ENCODE measurements at regions of chr4 and their contacts with region 1.

Region 1: DNA sequence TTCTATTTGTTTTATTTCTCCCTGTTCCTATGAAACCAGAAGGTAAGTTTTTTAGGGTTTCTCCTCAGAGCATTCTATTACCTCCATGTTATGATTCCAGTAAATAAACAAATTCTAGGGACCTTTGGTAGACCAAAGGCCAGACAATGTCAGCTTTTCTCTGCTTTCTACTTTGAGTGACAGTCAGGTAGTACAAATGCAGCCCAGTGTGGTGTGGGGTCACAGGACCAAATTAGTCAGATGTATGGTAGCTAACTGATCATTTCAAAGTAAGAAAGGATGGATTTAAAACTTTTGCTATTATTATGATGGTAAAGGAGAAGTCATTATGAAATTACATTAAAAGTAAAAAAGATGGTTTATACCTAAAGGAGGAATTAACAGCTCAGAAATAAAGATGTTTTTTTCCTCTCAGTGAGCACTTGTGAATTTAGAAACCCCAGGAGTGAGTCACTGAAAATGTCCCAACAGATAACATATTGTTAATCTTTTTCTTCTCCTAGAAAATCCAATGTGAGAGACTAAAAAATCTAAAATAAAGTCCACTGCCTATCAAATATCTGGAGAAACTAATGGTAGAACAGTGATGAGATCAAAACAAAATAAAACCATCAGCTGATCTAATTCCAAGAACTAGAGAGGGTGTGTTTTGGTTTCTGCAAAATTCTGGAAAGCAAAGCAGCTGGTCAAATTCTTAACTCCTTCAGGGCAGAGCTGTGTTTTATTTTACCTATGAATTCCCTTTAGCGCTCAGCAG is 16.6 kb upstream of the KLHL2 start:
- DNase-seq: no peak
- ATAC-seq: no peak
- H3K4me3 ChIP-seq: no peak overlapping the region
- H3K4me3 Mint-ChIP-seq: no peak overlapping the region
- H3K27ac ChIP-seq: no peak overlapping the region
- H3K27ac Mint-ChIP-seq: peak overlapping the region in 1 of 9 donors; percentile 22
- H3K4me1 ChIP-seq: no peaks in the 10 kb centered on the region
- H3K4me1 Mint-ChIP-seq: peaks cover 7 to 28% (median 22%) of the 10 kb centered on the region in 7 donors
- H3K27me3 ChIP-seq: no peaks in the 10 kb centered on the region
- H3K27me3 Mint-ChIP-seq: no peaks in the 10 kb centered on the region

Region 2: DNA sequence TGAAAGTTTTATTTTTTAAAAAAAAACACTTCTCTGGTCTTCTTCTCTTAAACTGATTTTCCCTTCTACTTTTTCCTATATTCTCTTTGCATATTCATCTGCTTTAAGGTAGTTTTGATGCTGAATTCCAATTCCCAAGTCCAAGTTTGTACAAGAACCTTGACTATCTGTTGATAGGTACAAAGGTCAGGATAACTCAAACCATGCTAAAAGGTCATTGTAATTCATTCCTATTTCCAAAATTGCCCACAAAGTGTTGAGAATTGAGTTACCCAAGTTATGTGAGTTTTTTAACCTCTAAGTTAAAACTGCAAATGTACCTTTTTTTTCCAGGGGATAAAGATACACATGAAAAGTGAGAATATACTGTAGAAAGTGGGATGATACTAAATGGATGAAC is 32.0 kb before region 1 on chr4:
- CTCF ChIA-PET with region 1: no interaction called
- POLR2A ChIA-PET with region 1: no interaction called
- intact Hi-C with region 1: loop called in 1 of 2 experiments (anchors 1 kb)
- DNase-seq: no peak
- ATAC-seq: no peak
- H3K4me3 ChIP-seq: no peak overlapping the region
- H3K4me3 Mint-ChIP-seq: no peak overlapping the region
- H3K27ac ChIP-seq: no peak overlapping the region
- H3K27ac Mint-ChIP-seq: no peak overlapping the region
- H3K4me1 ChIP-seq: no peaks in the 10 kb centered on the region
- H3K4me1 Mint-ChIP-seq: peaks cover 0 to 2% (median 0%) of the 10 kb centered on the region in 7 donors
- H3K27me3 ChIP-seq: peaks cover 0 to 6% of the 10 kb centered on the region in 2 donors
- H3K27me3 Mint-ChIP-seq: peaks cover 0 to 23% (median 9%) of the 10 kb centered on the region in 5 donors

Region 3: GRCh38 chr4:165207431-165208220 is 16.9 kb after region 1 on chr4 and contains the start of gene KLHL2:
- CTCF ChIA-PET with region 1: no interaction called
- POLR2A ChIA-PET with region 1: interaction called, 5 read pairs
- intact Hi-C with region 1: loop called in 1 of 2 experiments (anchors 2 kb)
- DNase-seq: peak; percentile 52 to 78 (median 66)
- ATAC-seq: peak; percentile 88
- H3K4me3 ChIP-seq: peak within 1 kb of the TSS; percentile 89
- H3K4me3 Mint-ChIP-seq: peak within 1 kb of the TSS; percentile 86 to 98 (median 96)
- H3K27ac ChIP-seq: peak within 1 kb of the TSS; percentile 65
- H3K27ac Mint-ChIP-seq: peak within 1 kb of the TSS; percentile 90 to 95 (median 92)
- H3K4me1 ChIP-seq: peaks cover 0 to 33% of the 10 kb centered on the region in 2 donors
- H3K4me1 Mint-ChIP-seq: peaks cover 46 to 75% (median 73%) of the 10 kb centered on the region in 7 donors
- H3K27me3 ChIP-seq: no peaks in the 10 kb centered on the region
- H3K27me3 Mint-ChIP-seq: no peaks in the 10 kb centered on the region
- total RNA-seq, gene KLHL2: 26.9 to 39.9 (median 27.9) TPM

Measured in naive thymus-derived CD4-positive, alpha-beta T cell (primary cell).